ENCODE measurements at regions of chr3 and their contacts with region 1.

Region 1: DNA sequence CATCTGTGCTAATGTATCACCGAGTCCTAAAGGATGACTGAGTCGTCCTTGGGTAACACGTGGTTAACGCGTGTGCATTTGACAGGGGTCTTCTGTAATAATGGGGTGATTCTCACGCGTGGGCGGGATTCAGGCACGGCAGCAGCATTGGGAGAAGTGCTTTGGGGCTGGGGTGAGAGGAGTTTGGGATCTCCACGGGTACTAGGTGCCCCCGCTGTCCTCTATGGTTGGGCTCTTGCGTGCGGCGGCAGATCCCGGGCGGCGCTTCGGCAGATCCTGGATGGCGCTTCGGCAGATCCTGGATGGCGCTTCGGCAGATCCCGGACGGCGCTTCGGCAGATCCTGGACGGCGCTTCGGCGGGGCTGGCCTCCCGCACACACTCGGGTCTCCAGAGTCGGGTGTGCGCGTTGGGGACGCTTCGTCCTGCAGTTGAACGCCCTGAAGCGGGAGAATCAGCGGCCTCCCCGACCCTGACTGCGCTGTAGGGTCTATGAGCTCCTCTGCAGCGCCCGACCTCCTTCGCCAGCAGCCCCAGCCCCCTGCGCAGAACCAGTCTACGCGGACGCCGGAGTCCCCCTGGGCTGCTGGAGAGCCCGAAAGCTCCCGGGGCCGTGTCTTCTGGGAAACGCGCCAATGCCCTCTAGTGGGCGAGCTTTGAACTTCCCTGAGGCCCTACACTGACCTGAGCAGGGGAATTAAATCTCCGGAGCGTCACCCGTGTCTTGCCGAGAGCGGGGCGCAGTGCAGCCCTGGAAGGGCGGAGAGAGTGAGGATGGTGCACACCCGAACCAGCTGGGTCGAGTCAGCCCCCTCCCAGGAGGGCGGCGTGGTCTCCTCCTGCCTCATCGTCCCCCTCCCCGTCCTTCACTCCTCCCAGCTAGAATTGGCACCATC is 48.1 kb upstream of the EPHB3 start:
- DNase-seq: peak; percentile 88 to 93 (median 90)
- H3K4me3 ChIP-seq: peak overlapping the region; percentile 2 to 78 (median 52)
- H3K27ac ChIP-seq: no peak overlapping the region
- H3K4me1 ChIP-seq: peaks cover 3 to 17% (median 17%) of the 10 kb centered on the region in 4 experiments
- H3K27me3 ChIP-seq: peaks cover 0 to 11% (median 0%) of the 10 kb centered on the region in 5 experiments

Region 2: DNA sequence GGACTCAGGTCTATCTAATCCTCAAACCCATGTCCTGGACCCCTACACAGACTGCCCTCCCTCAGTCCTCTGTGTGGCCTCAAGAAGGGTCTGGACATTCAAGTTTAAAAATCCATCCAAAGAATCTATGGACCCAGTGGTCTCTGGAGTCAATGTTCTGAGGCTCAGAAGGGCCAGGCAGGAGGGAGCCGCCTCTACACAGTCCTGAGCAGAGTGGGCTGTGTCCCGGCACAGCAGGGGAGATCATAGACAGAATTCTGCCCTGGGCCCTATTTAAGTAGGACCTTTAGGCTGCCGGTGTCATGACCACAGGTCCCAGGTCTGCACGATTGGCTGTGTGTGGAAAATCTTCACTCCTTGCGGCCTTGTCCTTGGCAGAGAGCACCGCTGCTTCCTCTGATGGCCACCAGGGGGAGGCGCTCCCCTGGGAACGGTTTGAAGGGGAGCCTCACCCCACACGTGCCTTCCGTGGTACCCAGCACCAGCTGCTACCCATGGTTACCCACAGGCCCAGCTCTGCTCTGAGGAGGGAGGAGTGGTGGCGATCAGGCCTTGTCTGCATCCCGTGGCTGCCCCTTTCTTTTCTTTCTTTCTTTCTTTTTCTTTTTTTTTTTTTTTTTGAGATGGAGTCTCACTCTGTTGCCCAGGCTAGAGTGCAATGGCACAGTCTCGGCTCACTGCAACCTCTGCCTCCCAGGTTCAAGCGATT is 95.8 kb before region 1 on chr3:
- CTCF ChIA-PET with region 1: interaction called, 43 read pairs
- POLR2A ChIA-PET with region 1: interaction called, 3 read pairs
- DNase-seq: peak; percentile 85 to 90 (median 88)
- H3K4me3 ChIP-seq: no peak overlapping the region
- H3K27ac ChIP-seq: no peak overlapping the region
- H3K4me1 ChIP-seq: no peaks in the 10 kb centered on the region
- H3K27me3 ChIP-seq: no peaks in the 10 kb centered on the region

Region 3: GRCh38 chr3:184469423-184469822 is 44.1 kb before region 1 on chr3:
- CTCF ChIA-PET with region 1: interaction called, 104 read pairs
- POLR2A ChIA-PET with region 1: interaction called, 3 read pairs
- DNase-seq: no peak
- H3K4me3 ChIP-seq: no peak overlapping the region
- H3K27ac ChIP-seq: no peak overlapping the region
- H3K4me1 ChIP-seq: peaks cover 6 to 67% (median 50%) of the 10 kb centered on the region in 4 experiments
- H3K27me3 ChIP-seq: no peaks in the 10 kb centered on the region

Region 4: DNA sequence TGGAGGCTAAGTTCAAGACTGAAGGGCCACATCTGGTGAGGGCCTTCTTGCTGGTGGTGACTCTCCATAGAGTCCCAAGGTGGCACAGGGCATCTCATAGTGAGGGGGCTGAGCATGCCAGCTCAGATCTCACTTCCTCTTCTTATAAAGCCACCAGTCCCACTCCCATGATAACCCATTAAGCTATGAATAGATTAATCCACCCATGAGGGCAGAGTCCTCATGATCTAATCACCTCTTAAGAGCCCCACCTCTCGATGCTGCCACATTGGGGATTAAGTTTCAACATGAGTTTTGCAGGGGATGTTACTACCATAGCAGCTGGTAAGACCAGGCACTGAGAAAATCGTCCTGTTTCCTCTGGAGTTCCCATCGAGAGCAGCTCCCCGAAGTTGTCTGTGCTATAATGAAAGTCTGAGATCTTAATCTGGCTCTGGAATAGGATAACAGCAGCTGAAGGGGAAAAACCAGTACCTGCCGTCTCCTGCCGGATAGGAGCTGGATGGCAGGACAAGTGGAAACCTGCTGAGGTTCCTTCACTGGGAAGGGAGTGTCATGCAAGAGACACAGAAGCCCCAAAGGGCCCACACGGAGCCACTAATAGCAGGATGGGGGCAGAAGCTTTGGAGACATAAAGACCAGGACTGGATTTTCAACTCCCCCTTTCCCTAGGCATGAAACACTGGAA is 31.4 kb before region 1 on chr3:
- CTCF ChIA-PET with region 1: interaction called, 24 read pairs
- POLR2A ChIA-PET with region 1: no interaction called
- DNase-seq: peak in 1 of 3 donors; percentile 62
- H3K4me3 ChIP-seq: no peak overlapping the region
- H3K27ac ChIP-seq: no peak overlapping the region
- H3K4me1 ChIP-seq: peaks cover 0 to 15% (median 6%) of the 10 kb centered on the region in 4 experiments
- H3K27me3 ChIP-seq: no peaks in the 10 kb centered on the region

Region 5: GRCh38 chr3:184543843-184544512 is 30.5 kb after region 1 on chr3:
- CTCF ChIA-PET with region 1: interaction called, 106 read pairs
- POLR2A ChIA-PET with region 1: no interaction called
- DNase-seq: peak; percentile 85 to 93 (median 89)
- H3K4me3 ChIP-seq: peak overlapping the region in 1 of 7 experiments; percentile 45
- H3K27ac ChIP-seq: no peak overlapping the region
- H3K4me1 ChIP-seq: peaks cover 0 to 12% (median 3%) of the 10 kb centered on the region in 4 experiments
- H3K27me3 ChIP-seq: peaks cover 0 to 8% (median 3%) of the 10 kb centered on the region in 5 experiments

Region 6: DNA sequence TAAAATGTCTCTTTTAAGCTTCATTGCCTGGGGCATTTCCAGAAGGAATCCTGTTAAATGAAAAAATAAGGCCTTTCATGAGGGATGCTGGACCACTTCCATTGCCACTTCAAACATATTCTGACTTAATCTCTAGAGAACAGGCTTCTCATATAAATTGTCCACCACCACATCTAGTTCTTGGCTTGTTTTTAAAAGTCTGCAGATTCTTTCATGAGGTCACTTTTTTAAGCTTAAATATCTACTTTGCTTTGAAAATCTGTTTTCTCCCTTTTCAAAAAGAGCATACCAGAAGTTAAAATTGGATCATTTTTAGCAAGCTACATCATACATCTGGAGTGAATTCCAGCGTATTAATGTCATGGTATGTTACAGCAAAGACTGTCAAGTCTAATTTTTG is 507.7 kb after region 1 on chr3:
- CTCF ChIA-PET with region 1: no interaction called
- POLR2A ChIA-PET with region 1: no interaction called
- DNase-seq: no peak
- H3K4me3 ChIP-seq: no peak overlapping the region
- H3K27ac ChIP-seq: no peak overlapping the region
- H3K4me1 ChIP-seq: peaks cover 0 to 17% (median 4%) of the 10 kb centered on the region in 4 experiments
- H3K27me3 ChIP-seq: no peaks in the 10 kb centered on the region